Activated T-helper 2 cell treated with anti-CD3 and anti-CD28 coated beads, Interferon-gamma antibody, Interleukin-2, Interleukin-4, amounts not matched to agents 10 μg/mL and 5 μg/mL and 100 μg/mL, durations not matched to agents 14 hours and 24 hours and 36 hours (primary cell): ENCODE measurements at regions of chr20 and their contacts with region 1.

Region 1: DNA sequence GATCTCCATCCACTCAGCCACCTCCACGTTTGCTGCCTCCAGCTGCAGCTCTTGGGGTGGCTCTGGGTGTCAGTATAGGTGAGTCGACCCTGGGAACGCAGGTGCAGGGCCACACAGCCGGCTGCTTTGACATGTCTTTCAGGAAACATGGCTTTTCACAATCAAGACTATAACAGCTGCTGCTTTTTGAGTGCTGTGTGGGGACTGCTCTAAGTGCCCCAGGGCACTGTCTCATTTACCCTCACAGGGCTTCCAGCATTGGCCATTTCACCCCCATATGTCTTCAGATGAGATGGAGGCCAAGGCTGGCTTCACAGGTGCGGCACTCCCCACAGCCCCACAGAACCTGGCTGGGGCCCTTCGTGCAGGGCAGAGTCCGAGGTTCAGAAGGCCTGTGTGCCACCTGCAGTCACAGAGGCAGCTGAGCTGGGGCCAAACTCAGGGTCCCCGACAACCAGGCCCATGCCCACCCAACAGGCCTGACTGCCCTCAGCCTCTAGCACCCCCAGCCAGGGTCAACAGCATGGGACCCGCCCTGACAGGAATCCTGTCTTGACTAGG is 14.9 kb upstream of the CST7 start:
- DNase-seq: no peak
- H3K4me3 Mint-ChIP-seq: no peak overlapping the region
- H3K27ac Mint-ChIP-seq: no peak overlapping the region
- H3K4me1 Mint-ChIP-seq: peaks cover 37% of the 10 kb centered on the region
- H3K27me3 Mint-ChIP-seq: no peaks in the 10 kb centered on the region

Region 2: DNA sequence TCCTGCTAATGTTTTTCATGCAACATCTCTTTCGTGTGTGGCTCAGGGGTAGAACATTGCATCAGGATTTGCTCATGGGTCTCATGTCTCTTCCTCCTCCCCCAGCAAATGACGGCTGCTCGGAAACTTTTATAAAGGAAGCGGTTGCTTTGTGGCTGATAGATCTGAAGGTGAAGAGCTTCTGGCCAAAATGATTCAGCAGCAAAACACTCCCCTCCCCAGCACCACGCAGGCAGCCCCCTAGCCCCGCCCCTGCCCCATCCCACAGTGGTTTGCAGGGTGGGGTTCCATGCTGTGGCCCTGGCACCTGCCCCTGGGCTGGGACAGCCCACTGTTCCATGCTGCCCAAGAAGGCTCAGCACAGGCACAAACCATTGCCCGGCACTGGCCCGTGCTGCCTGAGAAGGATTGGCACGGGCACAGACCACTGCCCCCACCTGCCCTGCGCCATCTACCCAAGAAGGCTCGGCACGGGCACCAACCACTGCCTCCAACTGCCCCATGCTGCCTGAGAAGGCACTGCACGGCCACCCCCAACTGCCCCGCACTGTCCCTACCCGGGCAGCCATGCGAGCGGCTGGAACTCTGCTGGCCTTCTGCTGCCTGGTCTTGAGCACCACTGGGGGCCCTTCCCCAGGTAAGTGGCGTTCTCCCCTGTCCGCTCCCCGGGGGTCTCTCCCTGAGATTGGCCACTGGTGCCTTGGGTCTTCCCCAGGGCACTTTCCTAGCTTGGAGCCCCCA is 14.9 kb after region 1 on chr20 and contains the start of gene CST7:
- intact Hi-C with region 1: loop called (anchors 1 kb)
- DNase-seq: peak; percentile 83
- H3K4me3 Mint-ChIP-seq: peak within 1 kb of the TSS; percentile 94
- H3K27ac Mint-ChIP-seq: peak within 1 kb of the TSS; percentile 96
- H3K4me1 Mint-ChIP-seq: peaks cover 57% of the 10 kb centered on the region
- H3K27me3 Mint-ChIP-seq: no peaks in the 10 kb centered on the region
- total RNA-seq, gene CST7: 115 and 121 TPM in 2 replicates

Region 3: DNA sequence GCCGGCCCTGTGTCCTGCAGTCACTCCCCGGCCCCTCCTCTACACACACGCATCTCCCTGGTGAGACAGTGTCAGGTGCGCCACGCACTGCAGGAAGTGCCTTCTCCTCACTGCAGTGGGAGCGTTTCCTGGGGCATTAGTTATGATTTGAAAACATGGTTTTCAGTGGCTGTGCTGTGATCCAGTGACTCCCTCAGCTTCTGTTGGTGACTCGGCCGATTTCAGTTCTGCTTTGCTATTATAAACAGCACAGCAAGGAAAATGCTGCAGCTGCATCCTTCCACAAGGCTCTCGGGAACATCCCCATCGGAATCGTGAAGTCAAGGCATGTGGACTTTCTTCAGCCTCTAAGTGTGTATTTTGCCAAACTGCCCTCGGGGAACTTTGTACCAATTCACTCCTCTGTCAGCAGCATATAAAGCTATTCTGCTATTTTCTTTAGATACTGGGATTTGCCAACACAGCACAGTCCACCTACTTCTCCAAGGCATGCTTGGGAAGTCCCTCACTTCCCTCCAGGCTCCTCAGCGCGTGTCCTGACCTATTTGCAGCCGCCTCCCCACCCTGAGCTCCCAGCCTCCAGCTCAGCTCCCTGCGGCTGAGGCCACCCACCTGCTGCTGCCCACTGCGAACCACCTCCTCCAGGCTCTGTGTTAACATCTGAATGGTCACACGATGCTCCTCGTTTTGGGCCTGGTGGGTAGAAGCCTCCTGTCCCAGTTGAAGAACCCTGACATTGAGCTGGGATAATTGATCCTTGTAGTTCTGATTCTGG is 527.8 kb after region 1 on chr20:
- intact Hi-C with region 1: no loop called
- DNase-seq: no peak
- H3K4me3 Mint-ChIP-seq: no peak overlapping the region
- H3K27ac Mint-ChIP-seq: no peak overlapping the region
- H3K4me1 Mint-ChIP-seq: no peaks in the 10 kb centered on the region
- H3K27me3 Mint-ChIP-seq: no peaks in the 10 kb centered on the region